IMR-90 (cell line): ENCODE measurements at regions of chr3 and their contacts with region 1.

Region 1: DNA sequence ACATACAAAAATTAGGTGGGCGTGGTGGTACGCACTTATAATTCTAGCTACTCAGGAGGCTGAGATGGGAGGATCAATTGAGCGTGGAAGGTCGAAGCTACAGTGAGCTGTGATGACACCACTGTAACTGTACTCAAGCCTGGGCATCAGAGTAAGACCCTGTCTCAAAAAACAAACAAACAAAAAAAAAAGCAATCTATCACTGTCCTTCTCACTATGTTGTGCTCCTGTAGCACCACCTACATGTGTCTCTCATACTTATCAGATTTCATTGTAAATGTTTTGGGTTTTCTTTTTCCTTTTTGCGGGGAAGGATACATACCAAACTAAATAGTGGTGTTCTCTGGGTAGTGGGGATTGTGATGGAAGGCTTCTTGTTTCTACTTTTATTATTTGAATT is 14.8 kb downstream of the FANCD2 start:
- DNase-seq: no peak
- ATAC-seq: no peak
- H3K4me3 ChIP-seq: no peak overlapping the region
- H3K27ac ChIP-seq: no peak overlapping the region
- H3K4me1 ChIP-seq: no peaks in the 10 kb centered on the region
- H3K27me3 ChIP-seq: no peaks in the 10 kb centered on the region
- CTCF ChIP-seq: no peak
- POLR2A ChIP-seq: no peak
- RAD21 ChIP-seq: no peak

Region 2: DNA sequence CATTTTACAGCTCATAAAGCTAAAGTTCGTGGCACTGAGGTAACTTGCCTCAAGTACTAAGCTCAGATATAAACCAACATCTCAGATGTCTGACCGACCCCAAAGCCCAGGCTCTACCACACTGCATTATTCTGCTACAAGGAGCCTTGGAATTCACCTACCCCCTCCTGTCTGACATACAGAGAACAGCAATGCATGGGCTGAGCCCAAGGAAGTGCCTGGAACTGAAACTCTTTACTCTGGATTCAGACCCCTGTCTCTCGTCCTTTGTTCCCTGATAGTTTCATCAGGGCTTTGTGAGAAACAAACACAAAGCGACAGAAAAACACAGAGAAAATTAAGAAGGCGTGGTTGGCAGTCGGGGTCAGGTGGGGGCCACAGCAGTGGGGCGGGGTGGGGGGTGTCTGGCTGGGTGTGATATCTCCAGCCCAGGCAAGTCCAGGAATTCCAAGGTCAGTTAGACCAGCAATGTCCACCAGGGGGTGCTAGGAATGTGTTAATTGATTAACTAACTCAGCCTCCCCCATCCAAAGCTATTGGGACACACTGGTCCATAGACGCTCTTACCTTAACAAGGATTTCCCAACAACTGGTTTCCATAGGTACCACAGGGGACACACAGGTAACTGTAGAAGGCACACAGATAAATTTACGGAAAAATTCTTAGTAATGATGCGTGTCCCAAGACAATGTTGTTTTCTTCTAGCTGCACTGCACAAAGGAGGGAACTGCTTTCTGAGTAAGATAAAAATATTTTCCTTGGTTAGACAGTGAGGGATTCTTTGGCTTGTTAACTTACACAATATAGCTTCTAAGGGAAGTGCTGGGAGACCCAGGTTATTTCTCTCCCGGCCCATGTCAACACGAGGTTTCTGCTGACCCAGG is 1377.6 kb before region 1 on chr3:
- CTCF ChIA-PET with region 1: no interaction called
- POLR2A ChIA-PET with region 1: no interaction called
- dilution Hi-C with region 1: no loop called
- in situ Hi-C with region 1: no loop called
- intact Hi-C with region 1: no loop called
- DNase-seq: peak; percentile 61
- ATAC-seq: peak; percentile 67
- H3K4me3 ChIP-seq: no peak overlapping the region
- H3K27ac ChIP-seq: no peak overlapping the region
- H3K4me1 ChIP-seq: peaks cover 8% of the 10 kb centered on the region
- H3K27me3 ChIP-seq: no peaks in the 10 kb centered on the region; the same call in 1 of the 2 replicates
- CTCF ChIP-seq: peak; percentile 58
- POLR2A ChIP-seq: no peak
- RAD21 ChIP-seq: peak; percentile 55

Region 3: DNA sequence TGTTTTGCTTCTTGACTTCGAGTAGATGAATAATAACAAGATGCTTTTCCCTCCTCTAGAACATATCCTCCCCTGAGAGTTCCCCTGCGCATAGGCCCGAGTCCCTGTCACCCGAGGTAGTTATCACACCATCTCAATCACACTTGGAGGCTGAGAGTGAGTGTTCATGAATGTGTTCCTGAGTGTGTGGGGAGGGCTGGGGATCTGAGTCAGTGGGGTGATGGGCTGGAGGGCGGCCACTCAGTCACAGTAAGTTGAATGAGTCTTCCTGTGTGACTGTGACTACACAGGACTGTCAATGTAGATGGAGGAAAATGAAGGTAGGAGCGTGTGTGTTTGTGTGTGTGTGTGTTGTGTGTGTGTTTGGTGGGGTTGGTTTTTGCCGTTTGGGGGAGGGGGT is 572.6 kb before region 1 on chr3:
- CTCF ChIA-PET with region 1: no interaction called
- POLR2A ChIA-PET with region 1: no interaction called
- dilution Hi-C with region 1: no loop called
- in situ Hi-C with region 1: no loop called
- intact Hi-C with region 1: no loop called
- DNase-seq: peak; percentile 37
- ATAC-seq: peak; percentile 46; the same call in 1 of the 2 replicates
- H3K4me3 ChIP-seq: no peak overlapping the region
- H3K27ac ChIP-seq: no peak overlapping the region
- H3K4me1 ChIP-seq: no peaks in the 10 kb centered on the region
- H3K27me3 ChIP-seq: no peaks in the 10 kb centered on the region
- CTCF ChIP-seq: no peak
- POLR2A ChIP-seq: no peak
- RAD21 ChIP-seq: no peak

Region 4: DNA sequence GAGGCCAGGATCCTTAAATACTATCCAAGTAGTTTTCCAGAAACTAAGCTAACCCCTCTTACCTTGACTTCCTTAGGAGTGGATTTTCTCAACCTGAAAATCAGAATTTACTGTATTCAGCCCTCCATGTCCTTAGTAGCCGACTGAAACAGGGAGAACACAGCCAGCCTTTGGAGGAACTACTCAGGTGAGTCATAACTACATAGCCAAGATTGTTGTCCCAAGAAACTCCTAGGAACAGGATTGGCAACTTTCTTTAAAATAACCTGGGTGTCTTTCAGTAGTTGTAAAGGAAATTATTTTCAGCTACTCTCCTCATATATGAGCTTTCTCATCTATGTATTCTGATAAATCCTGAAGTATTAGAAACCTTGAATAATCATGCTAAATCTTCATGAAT is 44.7 kb after region 1 on chr3:
- CTCF ChIA-PET with region 1: no interaction called
- POLR2A ChIA-PET with region 1: no interaction called
- dilution Hi-C with region 1: no loop called
- in situ Hi-C with region 1: no loop called
- intact Hi-C with region 1: loop called (anchors 5 kb)
- DNase-seq: no peak
- ATAC-seq: no peak
- H3K4me3 ChIP-seq: no peak overlapping the region
- H3K27ac ChIP-seq: no peak overlapping the region
- H3K4me1 ChIP-seq: no peaks in the 10 kb centered on the region
- H3K27me3 ChIP-seq: no peaks in the 10 kb centered on the region
- CTCF ChIP-seq: no peak
- POLR2A ChIP-seq: no peak
- RAD21 ChIP-seq: no peak

Region 5: DNA sequence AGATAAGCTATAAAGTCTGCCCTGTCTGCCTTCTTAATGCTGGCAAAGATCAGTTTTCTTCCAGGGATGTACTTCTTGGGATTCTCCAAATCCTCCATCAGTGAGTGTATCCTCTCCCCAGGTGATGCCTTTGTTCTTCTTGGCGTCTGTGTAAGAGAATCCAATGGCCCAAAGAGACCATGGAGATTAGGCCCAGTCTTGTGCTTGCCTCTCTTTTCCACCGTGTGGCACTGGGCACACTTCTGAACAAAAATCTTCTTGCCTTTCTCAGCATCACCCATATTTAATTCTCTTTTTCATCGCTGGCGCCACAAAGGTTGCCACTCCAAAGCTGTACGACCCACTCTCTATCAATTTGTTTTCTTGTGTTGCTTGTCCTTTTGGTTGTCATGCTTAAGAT is 1837.8 kb after region 1 on chr3:
- CTCF ChIA-PET with region 1: no interaction called
- POLR2A ChIA-PET with region 1: no interaction called
- dilution Hi-C with region 1: no loop called
- in situ Hi-C with region 1: loop called (anchors 10 kb)
- intact Hi-C with region 1: no loop called
- DNase-seq: no peak
- ATAC-seq: no peak
- H3K4me3 ChIP-seq: no peak overlapping the region
- H3K27ac ChIP-seq: no peak overlapping the region
- H3K4me1 ChIP-seq: no peaks in the 10 kb centered on the region
- H3K27me3 ChIP-seq: no peaks in the 10 kb centered on the region
- CTCF ChIP-seq: no peak
- POLR2A ChIP-seq: no peak
- RAD21 ChIP-seq: no peak